Activated CD4-positive, alpha-beta T cell treated with anti-CD3 and anti-CD28 coated beads, Interleukin-2, amount 10 ng/mL, durations not matched to agents 24 days and 14 days (primary cell): ENCODE measurements at regions of chrX and their contacts with region 1.

Region 1: GRCh38 chrX:2690856-2691542 is at the start of gene CD99:
- DNase-seq: peak; percentile 98
- H3K4me3 Mint-ChIP-seq: peak within 1 kb of the TSS; percentile 95
- H3K27ac Mint-ChIP-seq: peak within 1 kb of the TSS; percentile 98
- H3K4me1 Mint-ChIP-seq: peaks cover 32% of the 10 kb centered on the region
- H3K27me3 Mint-ChIP-seq: peaks cover 3% of the 10 kb centered on the region
- total RNA-seq, gene CD99: 361 and 371 TPM in 2 replicates

Region 2: DNA sequence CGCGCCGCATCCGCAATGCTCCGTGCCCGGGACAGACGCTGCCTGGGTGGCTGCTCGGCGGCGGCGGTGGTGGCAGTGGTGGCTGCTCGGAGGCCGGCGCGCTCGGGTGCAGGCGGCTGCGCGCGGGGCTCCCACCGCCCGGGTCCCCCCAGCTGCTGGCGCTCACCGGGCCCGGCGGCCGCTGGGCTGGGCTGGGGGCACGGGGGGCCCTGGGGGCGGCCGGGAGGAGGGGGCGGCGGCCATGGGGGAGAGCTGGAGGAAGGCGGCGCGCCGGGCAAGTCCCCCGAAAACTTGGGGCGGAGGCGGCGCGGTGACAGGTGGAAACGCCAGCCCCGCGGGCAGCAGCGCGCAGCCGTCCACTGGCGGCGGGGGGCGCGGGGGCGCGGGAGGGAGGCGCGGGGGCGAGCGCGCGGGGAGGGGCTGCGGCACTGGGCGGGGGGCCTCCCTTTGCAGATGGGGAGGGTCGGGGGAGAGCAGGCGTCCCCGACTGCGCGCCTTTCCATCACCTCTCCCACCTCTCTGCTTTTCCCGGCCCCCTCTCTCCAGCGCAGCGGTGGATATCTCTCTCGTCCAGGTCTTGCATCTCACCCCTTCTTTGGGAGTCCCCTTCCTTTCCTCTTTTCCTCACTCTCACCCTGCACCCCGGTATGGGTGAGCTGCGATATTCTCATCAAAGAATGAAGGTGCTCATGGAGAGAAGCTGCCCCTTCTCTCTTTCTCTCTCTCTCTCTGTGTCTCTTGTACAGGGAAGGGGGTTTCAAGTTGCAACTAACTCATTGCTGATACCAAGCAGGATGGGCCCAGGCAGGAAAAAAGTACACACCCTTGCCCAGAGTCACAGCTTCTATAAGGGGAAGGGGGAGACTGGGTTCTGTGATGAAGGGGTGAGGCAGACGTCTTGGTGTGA is 106.5 kb before region 1 on chrX:
- intact Hi-C with region 1: no loop called
- DNase-seq: no peak
- H3K4me3 Mint-ChIP-seq: peak overlapping the region; percentile 10
- H3K27ac Mint-ChIP-seq: no peak overlapping the region
- H3K4me1 Mint-ChIP-seq: peaks cover 3% of the 10 kb centered on the region
- H3K27me3 Mint-ChIP-seq: peaks cover 35% of the 10 kb centered on the region

Region 3: GRCh38 chrX:2608638-2609430 is 82.2 kb before region 1 on chrX:
- intact Hi-C with region 1: loop called (anchors 2 kb)
- DNase-seq: peak; percentile 97
- H3K4me3 Mint-ChIP-seq: peak overlapping the region; percentile 95
- H3K27ac Mint-ChIP-seq: peak overlapping the region; percentile 93
- H3K4me1 Mint-ChIP-seq: peaks cover 46% of the 10 kb centered on the region
- H3K27me3 Mint-ChIP-seq: no peaks in the 10 kb centered on the region

Region 4: GRCh38 chrX:2647627-2648026 is 43.4 kb before region 1 on chrX:
- intact Hi-C with region 1: loop called (anchors 1 kb)
- DNase-seq: no peak
- H3K4me3 Mint-ChIP-seq: peak overlapping the region; percentile 18
- H3K27ac Mint-ChIP-seq: peak overlapping the region; percentile 83
- H3K4me1 Mint-ChIP-seq: peaks cover 25% of the 10 kb centered on the region
- H3K27me3 Mint-ChIP-seq: no peaks in the 10 kb centered on the region

Region 5: GRCh38 chrX:2967998-2968909 is 277.3 kb after region 1 on chrX:
- intact Hi-C with region 1: loop called (anchors 10 kb)
- DNase-seq: peak; percentile 57
- H3K4me3 Mint-ChIP-seq: peak overlapping the region; percentile 70
- H3K27ac Mint-ChIP-seq: no peak overlapping the region
- H3K4me1 Mint-ChIP-seq: peaks cover 2% of the 10 kb centered on the region
- H3K27me3 Mint-ChIP-seq: no peaks in the 10 kb centered on the region